ENCODE measurements at regions of chr11 and their contacts with region 1.

Region 1: GRCh38 chr11:86802601-86803051 is 2.3 kb downstream of the PRSS23 start:
- DNase-seq: peak; percentile 74
- H3K4me3 Mint-ChIP-seq: peak overlapping the region; percentile 87
- H3K27ac Mint-ChIP-seq: peak overlapping the region; percentile 65
- H3K4me1 Mint-ChIP-seq: peaks cover 50% of the 10 kb centered on the region
- H3K27me3 Mint-ChIP-seq: peaks cover 27% of the 10 kb centered on the region

Region 2: GRCh38 chr11:85854557-85855340 is 947.9 kb before region 1 on chr11:
- intact Hi-C with region 1: loop called (anchors 5 kb)
- DNase-seq: peak; percentile 98
- H3K4me3 Mint-ChIP-seq: peak overlapping the region; percentile 94
- H3K27ac Mint-ChIP-seq: peak overlapping the region; percentile 96
- H3K4me1 Mint-ChIP-seq: peaks cover 11% of the 10 kb centered on the region
- H3K27me3 Mint-ChIP-seq: no peaks in the 10 kb centered on the region

Region 3: DNA sequence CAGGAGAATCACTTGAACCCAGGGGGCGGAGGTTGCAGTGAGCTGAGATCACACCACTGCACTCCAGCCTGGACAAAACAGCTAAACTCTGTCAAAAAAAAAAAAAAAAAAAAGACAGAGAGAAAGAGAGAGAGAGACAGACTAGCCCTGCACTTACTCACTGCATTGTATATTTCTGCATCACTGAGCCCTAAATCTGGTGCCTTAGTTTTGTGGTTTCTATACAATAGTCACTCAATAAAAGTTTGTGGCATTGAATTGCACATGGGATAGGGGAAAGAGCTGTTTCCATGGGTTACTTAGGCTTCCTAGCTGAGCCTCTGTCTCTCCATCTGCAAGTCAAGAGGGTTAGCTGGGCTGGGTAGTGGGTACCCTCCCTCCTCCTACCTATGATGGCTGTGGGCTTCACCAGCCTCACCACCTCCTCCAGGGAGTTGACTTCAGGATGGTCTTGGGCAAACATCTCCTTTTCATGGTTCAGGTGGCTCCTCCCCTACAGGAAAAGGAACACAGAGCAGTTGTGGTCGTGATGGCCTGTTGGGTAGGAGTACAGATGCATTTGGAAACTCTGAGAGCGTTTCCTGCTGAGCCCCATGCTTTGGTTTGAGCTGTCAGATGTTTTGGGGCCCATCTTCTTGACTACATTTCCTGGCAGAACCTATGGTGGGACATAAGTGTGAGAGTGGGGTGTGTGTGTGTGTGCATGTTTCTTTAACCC is 354.7 kb before region 1 on chr11:
- intact Hi-C with region 1: loop called (anchors 1 kb)
- DNase-seq: peak; percentile 79
- H3K4me3 Mint-ChIP-seq: peak overlapping the region; percentile 48
- H3K27ac Mint-ChIP-seq: no peak overlapping the region
- H3K4me1 Mint-ChIP-seq: peaks cover 37% of the 10 kb centered on the region
- H3K27me3 Mint-ChIP-seq: no peaks in the 10 kb centered on the region

Region 4: GRCh38 chr11:86637988-86638387 is 164.6 kb before region 1 on chr11:
- intact Hi-C with region 1: loop called (anchors 2 kb)
- DNase-seq: peak; percentile 77
- H3K4me3 Mint-ChIP-seq: no peak overlapping the region
- H3K27ac Mint-ChIP-seq: peak overlapping the region; percentile 42
- H3K4me1 Mint-ChIP-seq: peaks cover 30% of the 10 kb centered on the region
- H3K27me3 Mint-ChIP-seq: peaks cover 31% of the 10 kb centered on the region

Region 5: GRCh38 chr11:86740709-86741483 is 61.7 kb before region 1 on chr11:
- intact Hi-C with region 1: loop called (anchors 1 kb)
- DNase-seq: peak; percentile 55
- H3K4me3 Mint-ChIP-seq: no peak overlapping the region
- H3K27ac Mint-ChIP-seq: peak overlapping the region; percentile 57
- H3K4me1 Mint-ChIP-seq: peaks cover 27% of the 10 kb centered on the region
- H3K27me3 Mint-ChIP-seq: no peaks in the 10 kb centered on the region

Region 6: GRCh38 chr11:87223816-87224215 is 421.2 kb after region 1 on chr11:
- intact Hi-C with region 1: no loop called
- DNase-seq: no peak
- H3K4me3 Mint-ChIP-seq: no peak overlapping the region
- H3K27ac Mint-ChIP-seq: no peak overlapping the region
- H3K4me1 Mint-ChIP-seq: peaks cover 2% of the 10 kb centered on the region
- H3K27me3 Mint-ChIP-seq: no peaks in the 10 kb centered on the region